ENCODE measurements at regions of chr20 and their contacts with region 1.

Region 1: GRCh38 chr20:16517946-16518783 is 55.1 kb downstream of the KIF16B start:
- DNase-seq: peak in 2 of 6 donors; percentile 26 to 57
- ATAC-seq: peak; percentile 74 to 95 (median 90)
- H3K4me3 ChIP-seq: no peak overlapping the region
- H3K27ac ChIP-seq: no peak overlapping the region
- H3K4me1 ChIP-seq: no peaks in the 10 kb centered on the region
- H3K27me3 ChIP-seq: no peaks in the 10 kb centered on the region
- CTCF ChIP-seq: peak; percentile 23 to 48 (median 44)

Region 2: GRCh38 chr20:16761305-16761829 is 243.2 kb after region 1 on chr20:
- intact Hi-C with region 1: loop called in 1 of 3 experiments (anchors 5 kb)
- DNase-seq: peak in 3 of 6 donors; percentile 36 to 66 (median 49)
- ATAC-seq: peak; percentile 84 to 95 (median 92)
- H3K4me3 ChIP-seq: peak overlapping the region in 1 of 4 donors; percentile 22
- H3K27ac ChIP-seq: no peak overlapping the region
- H3K4me1 ChIP-seq: peaks cover 5 to 9% (median 9%) of the 10 kb centered on the region in 3 donors
- H3K27me3 ChIP-seq: no peaks in the 10 kb centered on the region
- CTCF ChIP-seq: peak; percentile 39 to 56 (median 52)